ENCODE measurements at regions of chr3 and their contacts with region 1.

Region 1: DNA sequence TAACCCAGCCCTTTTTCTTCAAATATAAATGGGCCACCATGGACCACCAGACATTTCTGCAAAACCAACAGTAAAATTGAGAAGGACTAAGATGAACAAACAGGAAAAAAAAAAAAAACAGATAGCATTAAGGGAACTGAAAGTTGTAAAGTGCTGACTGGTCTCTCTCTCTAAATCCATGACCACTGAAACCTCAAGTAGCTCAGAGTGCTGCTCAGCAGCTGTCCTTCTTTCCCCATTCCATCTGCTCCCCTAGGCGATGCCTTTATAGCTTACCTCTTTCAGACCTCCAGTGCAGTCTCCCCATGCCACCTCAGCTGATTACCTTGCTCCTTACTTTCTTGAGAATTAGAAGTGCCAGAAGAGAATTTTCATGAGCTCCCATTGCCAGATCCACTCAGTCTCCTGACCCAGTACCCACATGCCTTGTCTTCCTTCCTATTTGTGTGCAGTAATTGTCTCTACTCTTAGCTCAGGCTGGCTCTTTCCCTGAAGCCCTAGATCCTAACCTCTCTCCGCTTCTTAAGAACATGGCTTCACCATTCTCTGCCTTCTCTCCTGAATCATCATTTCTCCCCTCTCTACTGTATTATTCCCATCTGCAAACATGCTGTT is 23.9 kb upstream of the XIRP1 start:
- DNase-seq: no peak
- ATAC-seq: peak; percentile 94
- H3K4me3 Mint-ChIP-seq: peak overlapping the region; percentile 52
- H3K27ac Mint-ChIP-seq: peak overlapping the region; percentile 50
- H3K4me1 Mint-ChIP-seq: peaks cover 30% of the 10 kb centered on the region
- H3K27me3 Mint-ChIP-seq: peaks cover 3% of the 10 kb centered on the region
- CTCF ChIP-seq: no peak

Region 2: DNA sequence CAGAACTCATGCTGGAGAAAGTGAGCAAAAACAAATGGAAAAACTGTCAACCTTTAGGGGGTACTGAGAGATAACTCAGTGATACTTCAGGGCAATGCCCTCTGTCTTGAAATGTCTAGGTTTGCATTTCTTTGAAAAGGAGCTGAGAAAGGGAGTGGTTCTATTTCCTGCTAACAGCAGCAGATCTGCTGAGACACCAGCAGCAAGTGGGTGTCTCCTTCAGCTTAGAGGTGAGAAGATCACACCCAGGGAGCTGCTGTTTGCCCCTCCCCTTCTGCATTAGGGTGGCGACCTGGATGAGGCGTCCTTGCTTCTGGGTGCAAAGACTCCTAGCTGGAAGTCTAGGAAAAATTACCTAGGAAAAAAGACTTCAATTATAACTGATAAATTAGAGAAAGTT is 18.4 kb after region 1 on chr3:
- CTCF ChIA-PET with region 1: no interaction called
- POLR2A ChIA-PET with region 1: no interaction called
- intact Hi-C with region 1: loop called (anchors 2 kb)
- DNase-seq: no peak
- ATAC-seq: peak; percentile 37
- H3K4me3 Mint-ChIP-seq: no peak overlapping the region
- H3K27ac Mint-ChIP-seq: no peak overlapping the region
- H3K4me1 Mint-ChIP-seq: peaks cover 30% of the 10 kb centered on the region
- H3K27me3 Mint-ChIP-seq: peaks cover 6% of the 10 kb centered on the region
- CTCF ChIP-seq: no peak

Measured in activated B cell treated with CpG ODN at 0.5 μM for 24 hours (primary cell).